Heart left ventricle (tissue), 16 donors: ENCODE measurements at regions of chr4 and their contacts with region 1.

Region 1: DNA sequence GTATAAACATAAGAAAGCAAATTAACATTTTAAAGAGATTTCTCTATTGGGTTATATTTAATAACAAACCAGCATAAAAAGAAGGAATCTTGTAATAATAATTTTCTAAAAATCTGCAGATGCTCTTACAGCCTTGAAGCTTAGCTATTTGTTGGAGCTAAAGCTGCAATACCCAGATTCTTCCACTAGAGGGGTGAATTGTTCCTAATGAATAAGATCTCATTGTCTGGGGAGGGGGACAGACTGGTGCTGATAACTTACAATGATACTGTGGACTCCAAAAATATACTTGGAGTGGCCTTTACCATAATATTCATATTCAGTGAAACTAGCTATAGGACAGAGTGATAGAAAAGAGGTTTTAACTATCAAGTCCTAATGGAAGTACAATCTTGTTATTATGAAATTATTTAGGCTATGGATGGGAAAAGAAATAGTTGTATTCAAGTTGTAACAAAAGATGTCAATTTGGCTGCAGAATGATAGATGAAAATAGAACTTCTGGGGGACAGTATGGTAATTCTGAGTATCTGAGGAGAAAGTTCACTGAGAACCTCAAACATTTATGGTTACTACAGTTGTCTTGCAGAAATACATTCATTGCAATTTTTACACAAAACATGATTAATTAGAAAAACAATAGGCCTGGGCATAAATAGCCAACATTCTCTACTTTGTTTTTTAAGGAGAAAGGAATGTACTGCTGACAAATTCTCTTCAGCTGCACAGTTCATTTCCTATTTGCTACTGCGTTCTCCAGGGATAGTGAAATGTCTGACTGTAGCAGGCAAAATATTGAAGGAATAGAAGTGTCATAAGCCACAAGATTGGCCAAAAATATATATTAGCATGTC is 443.3 kb downstream of the GBA3 start:
- DNase-seq: no peak
- ATAC-seq: no peak
- H3K4me3 ChIP-seq: no peak overlapping the region
- H3K27ac ChIP-seq: no peak overlapping the region
- H3K4me1 ChIP-seq: no peaks in the 10 kb centered on the region
- H3K27me3 ChIP-seq: no peaks in the 10 kb centered on the region
- CTCF ChIP-seq: peak; percentile 62 to 81 (median 74)
- POLR2A ChIP-seq: no peak

Region 2: DNA sequence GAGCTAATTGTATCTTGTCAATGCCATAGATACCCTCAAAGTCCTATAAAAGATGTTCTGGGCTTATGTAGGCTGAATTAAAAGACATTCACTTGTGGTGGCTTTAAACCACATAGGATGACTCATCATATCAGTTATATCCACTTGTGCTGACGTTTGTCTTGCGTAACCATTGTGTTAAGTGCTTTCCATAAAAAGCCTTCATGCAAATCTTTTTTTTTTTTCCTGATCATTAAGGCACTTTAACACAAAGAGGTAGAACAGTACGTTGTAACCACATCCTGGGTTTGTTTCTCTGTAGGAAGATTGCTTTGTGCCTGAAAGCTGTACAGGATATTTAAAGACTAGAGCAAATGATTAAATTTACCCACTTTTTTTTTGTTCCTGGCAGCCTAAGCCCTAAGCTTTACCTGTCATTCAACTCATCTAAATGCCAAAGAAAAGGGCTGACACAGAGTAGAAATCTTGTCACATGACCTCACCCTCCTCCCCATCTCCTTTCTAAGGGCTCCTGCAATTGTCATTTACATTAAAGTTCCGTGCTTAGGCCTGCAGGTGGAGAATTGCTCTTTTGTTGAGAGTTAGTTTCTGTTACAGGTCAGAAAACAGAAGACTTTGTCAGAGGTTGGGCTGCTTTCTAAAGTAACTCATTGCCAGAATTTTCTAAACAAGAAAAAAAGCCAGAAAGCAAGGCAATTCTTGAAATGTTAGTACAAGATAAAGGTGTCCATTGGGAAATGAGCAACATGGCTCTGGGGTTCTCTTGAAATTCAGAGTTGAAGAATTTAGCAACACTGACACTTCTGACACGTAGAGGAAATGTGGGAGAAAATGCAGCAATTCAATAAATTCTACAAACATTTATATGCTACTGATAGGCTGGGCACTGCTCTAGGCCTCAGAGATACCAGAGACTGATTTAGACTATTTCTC is 198.2 kb after region 1 on chr4:
- intact Hi-C with region 1: loop called in 1 of 10 experiments (anchors 10 kb)
- DNase-seq: no peak
- ATAC-seq: peak in 3 of 4 donors; percentile 41 to 89 (median 83)
- H3K4me3 ChIP-seq: no peak overlapping the region
- H3K27ac ChIP-seq: peak overlapping the region in 2 of 12 donors; percentile 36 to 43
- H3K4me1 ChIP-seq: peaks cover 0 to 24% (median 2%) of the 10 kb centered on the region in 12 donors
- H3K27me3 ChIP-seq: no peaks in the 10 kb centered on the region
- CTCF ChIP-seq: no peak
- POLR2A ChIP-seq: no peak